H1 (cell line): ENCODE measurements at regions of chr5 and their contacts with region 1.

Region 1: GRCh38 chr5:159214486-159215271 is 5.3 kb upstream of the RNF145 start:
- DNase-seq: no peak
- H3K4me3 ChIP-seq: no peak overlapping the region
- H3K27ac ChIP-seq: no peak overlapping the region
- H3K4me1 ChIP-seq: peaks cover 1 to 9% (median 2%) of the 10 kb centered on the region in 4 experiments; a peak in 4 of 7 replicates
- H3K27me3 ChIP-seq: peaks cover 0 to 5% (median 1%) of the 10 kb centered on the region in 4 experiments; a peak in 3 of 7 replicates
- CTCF ChIP-seq: no peak
- EP300 ChIP-seq: no peak
- POLR2A ChIP-seq: no peak
- RAD21 ChIP-seq: no peak

Region 2: DNA sequence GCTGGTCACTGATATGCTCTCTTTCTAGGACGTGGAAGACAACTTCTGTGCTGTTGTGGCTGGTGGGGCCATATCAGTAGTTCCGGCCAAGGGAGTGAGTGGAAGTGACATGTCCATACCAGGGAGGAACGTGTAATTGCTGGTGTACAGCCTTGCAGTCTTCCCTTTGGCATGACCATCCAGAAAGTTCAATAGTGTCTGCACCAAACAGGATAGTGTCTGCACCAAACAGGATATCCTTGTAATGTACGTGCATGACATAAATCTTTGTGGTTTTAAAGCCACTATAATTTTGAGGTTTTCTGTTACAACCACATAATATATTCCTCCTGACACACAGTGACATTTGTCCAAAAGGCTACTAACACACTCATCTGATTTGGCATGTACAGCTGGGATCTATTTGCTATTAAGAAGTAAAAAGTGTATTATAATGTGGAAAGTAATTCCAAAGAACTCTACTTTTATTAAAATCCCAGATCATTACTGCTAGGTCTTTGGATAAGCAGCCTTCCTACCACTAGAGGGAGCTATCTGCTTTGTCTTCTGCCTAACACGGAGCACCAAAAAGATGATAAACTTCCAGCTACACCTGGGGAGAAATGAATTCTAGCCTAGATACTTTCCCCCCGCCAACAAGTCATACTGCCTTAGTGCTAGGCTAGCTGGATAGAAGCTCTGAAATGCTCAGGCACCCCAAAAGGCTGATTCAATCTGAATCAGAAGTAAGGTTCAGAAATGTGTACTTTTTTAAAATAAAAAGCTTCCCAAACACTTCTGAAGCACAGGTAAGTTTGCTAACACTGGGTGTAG is 58.0 kb before region 1 on chr5:
- CTCF ChIA-PET with region 1: interaction called, 10 read pairs
- POLR2A ChIA-PET with region 1: no interaction called
- DNase-seq: no peak
- H3K4me3 ChIP-seq: no peak overlapping the region
- H3K27ac ChIP-seq: no peak overlapping the region
- H3K4me1 ChIP-seq: no peaks in the 10 kb centered on the region
- H3K27me3 ChIP-seq: no peaks in the 10 kb centered on the region
- CTCF ChIP-seq: peak in 2 of 3 experiments; percentile 64 to 75; a peak in 3 of 4 replicates
- EP300 ChIP-seq: no peak
- POLR2A ChIP-seq: no peak
- RAD21 ChIP-seq: peak; percentile 85 to 88